Ovary (tissue), 10 donors: ENCODE measurements at regions of chr1 and their contacts with region 1.

Region 1: GRCh38 chr1:94926915-94927404 is at the start of gene CNN3:
- DNase-seq: peak; percentile 96 to 97 (median 96)
- H3K4me3 ChIP-seq: peak within 1 kb of the TSS; percentile 57
- H3K27ac ChIP-seq: peak within 1 kb of the TSS; percentile 99
- H3K4me1 ChIP-seq: peaks cover 19% of the 10 kb centered on the region
- H3K27me3 ChIP-seq: no peaks in the 10 kb centered on the region
- CTCF ChIP-seq: peak in 1 of 3 donors; percentile 5
- EP300 ChIP-seq: no peak
- POLR2A ChIP-seq: peak; percentile 98
- total RNA-seq, gene CNN3: 168 to 332 (median 272) TPM

Region 2: GRCh38 chr1:94079080-94079940 is 847.6 kb before region 1 on chr1:
- intact Hi-C with region 1: no loop called
- DNase-seq: peak in 1 of 5 donors; percentile 41
- H3K4me3 ChIP-seq: no peak overlapping the region
- H3K27ac ChIP-seq: no peak overlapping the region
- H3K4me1 ChIP-seq: peaks cover 1% of the 10 kb centered on the region
- H3K27me3 ChIP-seq: no peaks in the 10 kb centered on the region
- CTCF ChIP-seq: no peak
- EP300 ChIP-seq: no peak
- POLR2A ChIP-seq: no peak

Region 3: DNA sequence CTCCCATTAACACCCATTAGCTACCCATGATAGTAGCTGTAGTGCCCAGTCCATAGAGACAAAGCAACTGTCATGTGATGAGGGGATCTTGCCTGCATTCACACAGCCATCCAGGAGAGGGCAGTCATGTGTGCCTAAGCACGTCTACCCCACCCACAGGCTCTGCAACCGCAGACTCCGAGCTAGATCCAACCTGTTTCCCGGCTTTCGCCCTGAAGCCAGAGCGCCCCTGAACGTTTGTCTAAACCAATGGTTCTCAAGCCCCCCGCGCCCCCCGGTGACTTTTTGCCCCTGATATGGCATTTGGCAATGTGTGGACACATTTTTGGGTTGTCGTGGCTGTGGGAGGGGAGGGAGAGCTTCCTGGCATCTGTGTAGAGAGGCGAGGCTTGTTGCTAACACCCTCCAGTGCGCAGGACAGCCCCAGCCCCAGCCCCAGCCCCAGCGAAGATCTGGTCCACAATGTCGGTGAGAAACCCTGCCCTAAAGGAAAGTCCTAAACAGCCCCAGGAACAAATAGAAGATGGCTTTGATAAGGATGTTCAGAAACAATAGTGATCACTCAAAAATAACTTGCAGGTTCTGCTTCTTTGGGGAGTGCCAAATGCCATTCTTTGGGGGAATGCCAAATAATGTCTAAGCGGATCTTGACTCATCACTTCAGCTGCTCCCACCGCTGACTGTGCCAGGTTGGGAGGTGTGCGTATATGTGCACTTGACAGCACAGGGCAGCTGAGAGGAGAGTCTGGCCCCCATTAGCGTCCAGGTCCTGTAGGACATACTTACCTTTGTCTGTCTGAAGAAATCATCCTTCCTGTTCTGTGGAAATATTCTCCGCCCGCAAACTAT is 72.3 kb before region 1 on chr1:
- intact Hi-C with region 1: loop called in 2 of 4 experiments (anchors 2 to 5 kb)
- DNase-seq: peak; percentile 87 to 92 (median 90)
- H3K4me3 ChIP-seq: peak overlapping the region; percentile 40
- H3K27ac ChIP-seq: peak overlapping the region in 1 of 2 donors; percentile 50
- H3K4me1 ChIP-seq: peaks cover 6% of the 10 kb centered on the region
- H3K27me3 ChIP-seq: no peaks in the 10 kb centered on the region
- CTCF ChIP-seq: peak; percentile 87 to 98 (median 98)
- EP300 ChIP-seq: no peak
- POLR2A ChIP-seq: no peak

Region 4: DNA sequence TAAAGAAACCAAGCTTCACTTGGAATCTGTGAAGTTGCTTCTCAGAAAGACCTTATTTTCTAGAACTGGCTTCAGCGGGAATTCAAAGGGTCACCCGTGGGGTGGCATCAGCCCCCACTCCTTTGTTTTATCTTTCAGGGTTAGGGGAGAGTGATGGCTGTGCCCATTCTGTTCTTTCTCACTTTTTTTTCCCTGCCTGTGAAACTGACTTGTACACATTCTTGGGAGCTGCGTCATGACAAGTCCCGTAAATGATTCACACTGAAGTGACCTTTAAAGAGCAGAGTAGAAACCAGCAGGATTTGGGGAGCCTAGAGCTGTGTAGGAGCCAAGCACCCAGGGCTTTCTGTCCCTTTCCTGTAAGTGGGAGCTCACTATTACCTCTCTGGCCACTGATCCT is 63.0 kb before region 1 on chr1:
- intact Hi-C with region 1: loop called in 2 of 4 experiments (anchors 2 kb)
- DNase-seq: peak; percentile 46 to 83 (median 64)
- H3K4me3 ChIP-seq: peak overlapping the region; percentile 4
- H3K27ac ChIP-seq: peak overlapping the region; percentile 73 to 96
- H3K4me1 ChIP-seq: peaks cover 18% of the 10 kb centered on the region
- H3K27me3 ChIP-seq: no peaks in the 10 kb centered on the region
- CTCF ChIP-seq: peak in 1 of 3 donors; percentile 23
- EP300 ChIP-seq: peak; percentile 94
- POLR2A ChIP-seq: peak; percentile 36

Region 5: DNA sequence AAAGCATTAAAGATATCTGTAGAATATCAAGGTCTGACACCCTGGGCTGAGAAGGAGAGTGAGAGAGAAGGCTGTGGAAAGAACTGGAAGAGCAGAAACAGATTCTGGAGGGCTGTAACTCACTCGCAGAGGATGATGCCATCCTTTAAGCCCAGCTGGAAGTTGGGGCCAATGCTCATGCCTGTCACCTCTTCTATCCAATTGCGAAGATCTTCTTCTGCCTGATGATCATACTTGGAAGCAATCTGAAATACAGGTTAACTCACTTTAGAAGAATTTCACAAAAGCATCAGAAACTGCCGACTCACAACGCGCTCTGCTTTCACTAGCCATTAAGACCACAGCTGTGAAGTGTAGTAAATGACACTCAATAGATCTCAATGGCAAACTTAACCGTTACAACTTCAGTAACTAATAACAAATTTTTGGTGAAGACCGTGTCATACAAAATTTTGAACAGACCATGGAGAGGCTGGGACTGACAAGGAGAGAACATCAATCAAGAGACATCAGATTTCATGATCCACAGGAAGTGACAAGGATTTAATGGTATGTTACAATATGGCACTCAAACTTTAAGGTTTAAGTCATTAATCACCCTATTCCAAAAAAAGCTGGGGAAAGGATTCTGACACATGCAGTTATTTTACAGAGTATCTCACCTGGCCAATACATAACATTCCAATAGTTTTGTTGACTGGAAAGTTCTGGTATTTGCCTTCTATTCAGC is 23.5 kb before region 1 on chr1:
- intact Hi-C with region 1: no loop called
- DNase-seq: no peak
- H3K4me3 ChIP-seq: no peak overlapping the region
- H3K27ac ChIP-seq: peak overlapping the region in 1 of 2 donors; percentile 6
- H3K4me1 ChIP-seq: peaks cover 18% of the 10 kb centered on the region
- H3K27me3 ChIP-seq: no peaks in the 10 kb centered on the region
- CTCF ChIP-seq: no peak
- EP300 ChIP-seq: no peak
- POLR2A ChIP-seq: no peak

Region 6: GRCh38 chr1:95023399-95024043 is 96.6 kb after region 1 on chr1:
- intact Hi-C with region 1: loop called in 2 of 4 experiments (anchors 5 to 10 kb)
- DNase-seq: peak in 1 of 5 donors; percentile 39
- H3K4me3 ChIP-seq: no peak overlapping the region
- H3K27ac ChIP-seq: peak overlapping the region; percentile 63 to 68
- H3K4me1 ChIP-seq: no peaks in the 10 kb centered on the region
- H3K27me3 ChIP-seq: no peaks in the 10 kb centered on the region
- CTCF ChIP-seq: no peak
- EP300 ChIP-seq: no peak
- POLR2A ChIP-seq: no peak

Region 7: DNA sequence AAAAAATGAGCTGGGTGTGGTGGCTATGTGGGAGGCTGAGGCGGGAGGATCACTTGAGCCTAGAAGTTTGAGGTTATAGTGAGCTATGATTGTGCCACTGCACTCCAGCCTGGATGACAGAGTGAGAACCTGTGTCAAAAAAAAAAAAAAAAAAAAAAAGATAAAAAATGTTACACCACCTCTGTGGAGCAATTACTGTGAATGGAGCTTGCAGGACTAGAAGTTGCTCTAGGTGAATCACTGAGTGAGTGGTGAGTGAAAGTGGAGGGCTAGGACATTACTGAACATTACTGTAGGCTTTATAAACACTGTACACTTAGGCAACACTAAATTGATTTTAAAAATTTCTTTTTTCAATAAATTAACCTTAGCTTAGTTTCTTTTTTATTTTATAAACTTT is 212.1 kb after region 1 on chr1:
- intact Hi-C with region 1: no loop called
- DNase-seq: no peak
- H3K4me3 ChIP-seq: no peak overlapping the region
- H3K27ac ChIP-seq: no peak overlapping the region
- H3K4me1 ChIP-seq: no peaks in the 10 kb centered on the region
- H3K27me3 ChIP-seq: no peaks in the 10 kb centered on the region
- CTCF ChIP-seq: no peak
- EP300 ChIP-seq: no peak
- POLR2A ChIP-seq: no peak